ENCODE measurements at regions of chr15 and their contacts with region 1.

Region 1: GRCh38 chr15:57158589-57158988 is 217.7 kb upstream of the CGNL1 start:
- DNase-seq: no peak
- ATAC-seq: peak; percentile 84 to 89
- H3K4me3 ChIP-seq: no peak overlapping the region
- H3K27ac ChIP-seq: peak overlapping the region; percentile 70
- H3K4me1 ChIP-seq: peaks cover 4% of the 10 kb centered on the region
- H3K27me3 ChIP-seq: no peaks in the 10 kb centered on the region

Region 2: DNA sequence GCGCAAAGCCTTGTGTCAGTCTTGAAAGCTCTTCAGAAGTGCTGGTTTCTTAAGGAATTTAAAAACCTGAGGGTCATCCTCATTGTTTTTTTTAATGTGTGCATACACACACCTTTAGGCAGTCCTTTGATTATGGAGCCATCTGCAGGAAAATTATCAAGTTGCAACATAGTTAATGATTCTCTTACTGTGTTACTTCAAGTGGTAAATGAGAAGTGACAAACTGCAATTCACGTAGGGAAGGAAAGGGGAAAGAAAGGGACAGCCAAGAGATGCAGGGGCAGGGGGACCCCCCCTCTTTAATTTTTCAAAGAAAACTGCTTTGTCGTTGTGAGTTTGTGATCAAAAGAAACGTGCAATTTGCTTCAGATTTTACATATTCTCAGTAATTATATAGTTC is 55.3 kb after region 1 on chr15:
- intact Hi-C with region 1: loop called in 1 of 4 experiments (anchors 10 kb)
- DNase-seq: no peak
- ATAC-seq: peak; percentile 61 to 77
- H3K4me3 ChIP-seq: no peak overlapping the region
- H3K27ac ChIP-seq: no peak overlapping the region
- H3K4me1 ChIP-seq: no peaks in the 10 kb centered on the region
- H3K27me3 ChIP-seq: no peaks in the 10 kb centered on the region

Region 3: DNA sequence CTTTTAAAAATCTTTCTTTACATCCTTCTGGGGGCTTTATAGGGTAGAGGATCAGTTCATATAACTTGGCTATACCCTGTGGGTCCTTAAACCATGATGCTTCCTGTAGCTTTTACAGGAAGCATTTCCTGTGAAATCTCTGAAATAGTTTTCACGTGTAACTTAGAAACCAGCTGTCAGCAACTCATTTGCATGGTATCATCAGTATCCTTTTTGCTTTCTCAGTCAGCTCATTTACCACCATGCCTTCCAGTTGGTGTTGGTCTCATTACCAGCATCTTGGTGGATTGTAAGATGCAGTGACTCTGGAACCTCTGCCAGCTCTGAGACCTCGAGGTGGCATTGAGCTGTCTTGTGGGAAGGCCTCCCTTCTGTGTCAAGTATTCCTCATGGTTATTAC is 336.5 kb after region 1 on chr15:
- intact Hi-C with region 1: no loop called
- DNase-seq: no peak
- ATAC-seq: no peak
- H3K4me3 ChIP-seq: no peak overlapping the region
- H3K27ac ChIP-seq: no peak overlapping the region
- H3K4me1 ChIP-seq: no peaks in the 10 kb centered on the region
- H3K27me3 ChIP-seq: no peaks in the 10 kb centered on the region

Region 4: DNA sequence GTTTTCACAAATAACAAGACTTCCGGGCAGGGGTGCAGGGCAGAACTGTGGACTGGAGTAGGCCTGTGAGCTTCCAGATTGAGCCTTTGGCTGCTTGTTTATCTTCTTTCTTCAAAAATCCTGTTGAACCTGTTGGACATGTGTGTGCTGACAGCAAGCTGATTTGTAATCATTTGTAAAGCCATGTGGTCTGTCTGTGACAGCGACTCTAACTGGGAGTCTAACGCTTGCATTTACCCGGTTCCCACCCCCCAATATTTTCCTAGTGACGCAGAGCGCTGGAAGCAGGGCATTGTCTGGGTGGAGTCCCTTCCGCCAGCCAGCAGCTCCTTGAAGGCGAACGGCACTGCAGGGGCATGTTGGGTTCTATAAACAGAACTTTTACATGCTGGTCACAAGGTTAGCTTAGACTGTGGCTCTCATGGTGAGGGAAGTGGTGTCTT is 347.4 kb after region 1 on chr15:
- intact Hi-C with region 1: no loop called
- DNase-seq: peak; percentile 84 to 91 (median 90)
- ATAC-seq: peak; percentile 84 to 87
- H3K4me3 ChIP-seq: no peak overlapping the region
- H3K27ac ChIP-seq: peak overlapping the region; percentile 59
- H3K4me1 ChIP-seq: peaks cover 3% of the 10 kb centered on the region
- H3K27me3 ChIP-seq: no peaks in the 10 kb centered on the region